Activated naive CD4-positive, alpha-beta T cell treated with anti-CD3 and anti-CD28 coated beads for 36 hours (primary cell): ENCODE measurements at regions of chr5 and their contacts with region 1.

Region 1: DNA sequence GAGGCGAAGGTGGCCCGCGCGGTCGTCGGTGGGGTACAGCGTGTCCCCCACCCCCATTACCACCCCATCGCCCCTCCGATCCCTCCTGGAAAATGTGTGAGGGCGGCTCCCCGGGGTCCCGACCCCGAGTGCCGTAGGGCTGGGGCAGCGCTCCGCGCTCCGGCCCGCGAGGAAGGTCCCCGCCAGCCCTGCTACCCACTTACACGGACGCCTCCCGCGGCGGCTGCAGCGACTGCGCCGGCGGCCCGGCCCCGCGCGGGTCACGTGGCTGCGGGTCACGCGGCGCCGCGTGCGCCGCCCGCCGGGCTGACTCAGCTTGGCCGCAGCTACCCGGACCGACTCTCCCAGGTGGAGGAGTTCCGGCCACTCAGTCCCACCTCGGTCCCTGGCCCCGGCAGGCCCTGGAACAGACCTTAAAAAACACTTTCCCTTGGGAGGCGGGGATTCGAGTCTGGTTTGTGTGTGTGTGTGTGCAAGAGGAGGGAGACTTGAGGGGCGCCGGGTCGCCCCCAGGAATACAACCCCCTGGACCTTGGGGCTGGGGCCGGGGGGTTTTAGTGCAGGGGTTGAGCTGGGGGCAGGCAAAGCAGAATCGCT is at the start of gene GNPDA1:
- DNase-seq: peak; percentile 69
- H3K4me3 Mint-ChIP-seq: peak within 1 kb of the TSS; percentile 94
- H3K27ac Mint-ChIP-seq: peak within 1 kb of the TSS; percentile 94
- H3K4me1 Mint-ChIP-seq: peaks cover 76% of the 10 kb centered on the region
- H3K27me3 Mint-ChIP-seq: no peaks in the 10 kb centered on the region
- total RNA-seq, gene GNPDA1: 250 to 259 TPM

Region 2: GRCh38 chr5:141691867-141692532 is 320.9 kb before region 1 on chr5:
- CTCF ChIA-PET with region 1: interaction called, 5 read pairs
- intact Hi-C with region 1: loop called (anchors 2 kb)
- DNase-seq: peak; percentile 90
- H3K4me3 Mint-ChIP-seq: peak overlapping the region; percentile 53
- H3K27ac Mint-ChIP-seq: no peak overlapping the region
- H3K4me1 Mint-ChIP-seq: peaks cover 20% of the 10 kb centered on the region
- H3K27me3 Mint-ChIP-seq: peaks cover 7% of the 10 kb centered on the region

Region 3: GRCh38 chr5:141703133-141703561 is 309.7 kb before region 1 on chr5:
- CTCF ChIA-PET with region 1: no interaction called
- intact Hi-C with region 1: no loop called
- DNase-seq: no peak
- H3K4me3 Mint-ChIP-seq: peak overlapping the region; percentile 67
- H3K27ac Mint-ChIP-seq: no peak overlapping the region
- H3K4me1 Mint-ChIP-seq: peaks cover 15% of the 10 kb centered on the region
- H3K27me3 Mint-ChIP-seq: peaks cover 13% of the 10 kb centered on the region

Region 4: GRCh38 chr5:141729387-141730006 is 283.4 kb before region 1 on chr5:
- CTCF ChIA-PET with region 1: no interaction called
- intact Hi-C with region 1: no loop called
- DNase-seq: no peak
- H3K4me3 Mint-ChIP-seq: no peak overlapping the region
- H3K27ac Mint-ChIP-seq: no peak overlapping the region
- H3K4me1 Mint-ChIP-seq: no peaks in the 10 kb centered on the region
- H3K27me3 Mint-ChIP-seq: no peaks in the 10 kb centered on the region

Region 5: GRCh38 chr5:141903261-141903660 is 109.6 kb before region 1 on chr5:
- CTCF ChIA-PET with region 1: no interaction called
- intact Hi-C with region 1: no loop called
- DNase-seq: no peak
- H3K4me3 Mint-ChIP-seq: no peak overlapping the region
- H3K27ac Mint-ChIP-seq: no peak overlapping the region
- H3K4me1 Mint-ChIP-seq: no peaks in the 10 kb centered on the region
- H3K27me3 Mint-ChIP-seq: peaks cover 5% of the 10 kb centered on the region

Region 6: DNA sequence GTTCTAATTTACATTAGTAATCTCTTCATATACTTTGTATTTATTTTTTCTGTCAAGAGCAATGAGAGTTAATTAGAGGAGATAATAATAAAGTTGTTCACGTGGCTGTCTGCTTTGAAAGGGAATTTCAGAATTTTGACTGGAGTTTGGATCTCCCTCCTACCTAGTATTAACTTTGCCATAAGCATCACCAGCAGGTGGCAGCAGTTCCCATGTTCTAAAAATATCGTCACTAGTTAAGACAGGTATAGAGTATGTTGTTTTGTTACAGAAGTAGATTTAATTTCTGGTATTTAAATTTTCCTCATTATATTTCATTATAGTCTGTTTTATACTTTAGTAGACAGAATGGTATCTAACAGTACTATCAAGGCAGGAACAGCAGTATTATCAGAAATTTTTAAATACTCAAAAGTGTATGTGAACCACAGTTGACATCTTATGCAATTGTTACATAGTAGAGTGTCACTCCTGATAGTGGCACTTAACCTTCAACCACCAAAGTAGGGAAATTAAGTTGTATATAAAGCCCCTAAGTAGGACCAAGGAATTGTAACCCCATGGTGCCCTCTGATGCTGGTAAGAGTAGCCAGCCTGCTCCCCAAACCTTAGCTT is 20.4 kb before region 1 on chr5:
- CTCF ChIA-PET with region 1: interaction called, 137 read pairs
- intact Hi-C with region 1: loop called (anchors 1 kb)
- DNase-seq: peak; percentile 95
- H3K4me3 Mint-ChIP-seq: no peak overlapping the region
- H3K27ac Mint-ChIP-seq: peak overlapping the region; percentile 53
- H3K4me1 Mint-ChIP-seq: peaks cover 13% of the 10 kb centered on the region
- H3K27me3 Mint-ChIP-seq: no peaks in the 10 kb centered on the region

Region 7: DNA sequence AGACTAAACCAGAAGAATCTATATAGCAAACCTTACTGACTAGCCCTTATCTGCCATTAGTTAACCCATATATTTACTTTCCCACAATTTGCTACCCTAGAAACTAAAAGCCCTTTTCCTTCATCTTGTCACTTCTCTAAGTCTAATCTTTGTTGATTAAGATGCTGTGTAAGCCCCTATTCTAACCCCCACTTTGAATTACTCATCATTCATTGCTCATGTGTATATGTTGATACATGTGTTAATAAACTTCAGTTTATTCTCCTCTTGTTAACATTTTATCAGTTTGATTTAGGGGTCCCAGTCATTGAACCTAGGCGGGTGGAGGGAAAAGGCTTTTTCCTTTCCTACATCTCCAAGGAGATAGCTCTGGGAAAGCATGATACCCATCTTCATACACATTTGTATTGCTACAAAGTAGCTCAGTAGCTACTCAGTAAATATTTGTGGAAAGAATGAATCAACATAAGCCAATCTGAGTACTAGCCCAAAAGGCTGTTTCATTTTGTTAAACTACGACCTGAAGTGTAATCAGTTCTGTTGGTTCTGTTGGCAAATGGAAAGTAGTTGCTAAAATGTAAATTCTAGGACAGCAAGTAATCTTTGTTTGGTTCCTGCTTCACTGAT is 60.6 kb after region 1 on chr5:
- CTCF ChIA-PET with region 1: interaction called, 6 read pairs
- intact Hi-C with region 1: loop called (anchors 1 kb)
- DNase-seq: no peak
- H3K4me3 Mint-ChIP-seq: no peak overlapping the region
- H3K27ac Mint-ChIP-seq: no peak overlapping the region
- H3K4me1 Mint-ChIP-seq: peaks cover 38% of the 10 kb centered on the region
- H3K27me3 Mint-ChIP-seq: no peaks in the 10 kb centered on the region

Region 8: DNA sequence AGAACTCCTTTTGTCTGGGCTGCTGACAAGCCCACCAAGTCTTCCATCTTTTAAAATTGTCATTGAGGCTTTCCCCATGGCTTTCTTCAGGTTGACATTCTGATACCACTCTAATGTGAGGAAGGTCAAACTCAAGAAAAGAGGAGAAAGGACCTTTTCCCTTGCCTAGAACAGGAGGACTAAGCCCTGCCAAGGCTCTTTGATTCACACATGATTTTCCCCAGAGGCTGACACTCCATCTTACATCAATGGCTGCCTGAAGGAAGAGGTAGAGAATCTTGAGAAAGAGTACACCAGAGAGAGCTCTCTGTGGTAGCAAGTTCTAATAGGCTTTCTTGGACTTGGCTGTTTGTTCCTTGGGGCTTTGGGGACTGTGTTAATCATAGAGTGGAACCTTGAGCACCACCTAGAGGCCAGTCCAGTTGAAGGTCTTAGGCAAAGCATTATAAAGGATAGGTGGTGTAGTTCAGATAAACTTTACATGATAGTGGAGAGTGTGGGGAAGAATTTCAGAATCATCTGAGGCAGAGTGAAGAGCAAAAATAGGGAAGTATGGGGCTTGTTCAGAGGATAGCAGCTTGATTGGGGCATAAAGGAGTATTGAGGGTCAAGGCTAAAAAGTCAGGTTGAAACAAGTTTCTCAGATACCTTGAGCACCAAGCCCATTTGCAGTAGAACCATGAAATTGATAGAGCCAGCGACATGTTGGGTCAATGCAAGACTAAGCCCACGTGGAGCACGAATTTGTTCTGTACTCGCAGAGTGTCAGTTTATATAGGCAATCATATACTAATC is 132.4 kb after region 1 on chr5:
- CTCF ChIA-PET with region 1: interaction called, 83 read pairs
- intact Hi-C with region 1: loop called (anchors 1 kb)
- DNase-seq: peak; percentile 82
- H3K4me3 Mint-ChIP-seq: no peak overlapping the region
- H3K27ac Mint-ChIP-seq: no peak overlapping the region
- H3K4me1 Mint-ChIP-seq: peaks cover 11% of the 10 kb centered on the region
- H3K27me3 Mint-ChIP-seq: no peaks in the 10 kb centered on the region

Region 9: GRCh38 chr5:142356716-142357473 is 344.0 kb after region 1 on chr5:
- CTCF ChIA-PET with region 1: no interaction called
- intact Hi-C with region 1: loop called (anchors 2 kb)
- DNase-seq: peak; percentile 93
- H3K4me3 Mint-ChIP-seq: peak overlapping the region; percentile 77
- H3K27ac Mint-ChIP-seq: peak overlapping the region; percentile 94
- H3K4me1 Mint-ChIP-seq: peaks cover 52% of the 10 kb centered on the region
- H3K27me3 Mint-ChIP-seq: no peaks in the 10 kb centered on the region

Region 10: GRCh38 chr5:142453932-142454331 is 441.0 kb after region 1 on chr5:
- CTCF ChIA-PET with region 1: no interaction called
- intact Hi-C with region 1: no loop called
- DNase-seq: no peak
- H3K4me3 Mint-ChIP-seq: no peak overlapping the region
- H3K27ac Mint-ChIP-seq: no peak overlapping the region
- H3K4me1 Mint-ChIP-seq: no peaks in the 10 kb centered on the region
- H3K27me3 Mint-ChIP-seq: no peaks in the 10 kb centered on the region

Region 11: GRCh38 chr5:143051244-143052058 is 1038.6 kb after region 1 on chr5:
- CTCF ChIA-PET with region 1: no interaction called
- intact Hi-C with region 1: loop called (anchors 10 kb)
- DNase-seq: no peak
- H3K4me3 Mint-ChIP-seq: no peak overlapping the region
- H3K27ac Mint-ChIP-seq: no peak overlapping the region
- H3K4me1 Mint-ChIP-seq: peaks cover 67% of the 10 kb centered on the region
- H3K27me3 Mint-ChIP-seq: no peaks in the 10 kb centered on the region